ENCODE measurements at regions of chr17 and their contacts with region 1.

Region 1: DNA sequence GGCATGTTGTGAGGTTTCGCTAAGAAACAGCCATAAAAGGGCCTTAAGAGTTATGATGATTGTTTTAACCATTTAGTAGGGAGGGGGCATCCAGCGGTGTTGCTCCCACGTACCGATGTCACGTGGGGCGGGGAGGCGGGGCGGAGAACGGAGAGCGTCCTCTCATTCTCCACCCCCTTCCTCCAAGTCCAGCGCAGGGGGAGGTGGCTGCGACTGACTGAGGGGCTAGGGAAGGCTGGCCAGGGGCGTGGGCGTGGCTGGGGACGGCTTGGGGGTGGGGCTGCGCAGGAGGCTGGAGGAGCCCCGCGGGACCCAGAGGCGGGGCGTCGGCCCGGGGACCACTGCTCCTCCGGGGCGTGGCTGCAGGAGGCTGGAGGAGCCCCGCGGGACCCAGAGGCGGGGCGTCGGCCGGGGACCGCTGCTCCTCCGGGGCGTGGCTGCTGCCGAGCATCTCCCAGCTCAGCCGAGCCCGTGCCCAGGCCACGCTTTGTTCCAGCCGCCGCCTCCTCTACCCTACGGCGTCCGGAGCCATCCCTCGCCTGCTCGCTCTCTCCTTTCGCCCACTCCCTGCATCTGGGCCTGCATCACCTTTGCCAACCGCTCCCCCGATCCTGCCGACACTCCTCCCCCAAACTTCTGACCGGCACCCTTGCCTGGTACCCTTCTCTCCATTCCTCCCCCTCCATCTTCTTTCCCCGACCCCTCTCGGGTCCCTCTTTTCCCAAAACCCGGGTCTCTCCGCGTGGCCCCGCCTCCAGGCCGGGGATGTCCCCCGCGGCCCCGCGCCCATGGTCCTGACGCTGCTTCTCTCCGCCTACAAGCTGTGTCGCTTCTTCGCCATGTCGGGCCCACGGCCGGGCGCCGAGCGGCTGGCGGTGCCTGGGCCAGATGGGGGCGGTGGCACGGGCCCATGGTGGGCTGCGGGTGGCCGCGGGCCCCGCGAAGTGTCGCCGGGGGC is at the start of gene SARM1:
- DNase-seq: peak; percentile 87 to 92 (median 89)
- H3K4me3 ChIP-seq: peak within 1 kb of the TSS; percentile 58
- H3K27ac ChIP-seq: peak within 1 kb of the TSS in 1 of 2 donors; percentile 69
- H3K4me1 ChIP-seq: peaks cover 7% of the 10 kb centered on the region
- H3K27me3 ChIP-seq: no peaks in the 10 kb centered on the region
- CTCF ChIP-seq: no peak
- EP300 ChIP-seq: no peak
- POLR2A ChIP-seq: no peak
- total RNA-seq, gene SARM1: 7.4 to 21.5 (median 16.5) TPM

Region 2: GRCh38 chr17:28188841-28189263 is 182.7 kb before region 1 on chr17:
- intact Hi-C with region 1: no loop called
- DNase-seq: no peak
- H3K4me3 ChIP-seq: no peak overlapping the region
- H3K27ac ChIP-seq: no peak overlapping the region
- H3K4me1 ChIP-seq: no peaks in the 10 kb centered on the region
- H3K27me3 ChIP-seq: no peaks in the 10 kb centered on the region
- CTCF ChIP-seq: no peak
- EP300 ChIP-seq: no peak
- POLR2A ChIP-seq: no peak

Region 3: DNA sequence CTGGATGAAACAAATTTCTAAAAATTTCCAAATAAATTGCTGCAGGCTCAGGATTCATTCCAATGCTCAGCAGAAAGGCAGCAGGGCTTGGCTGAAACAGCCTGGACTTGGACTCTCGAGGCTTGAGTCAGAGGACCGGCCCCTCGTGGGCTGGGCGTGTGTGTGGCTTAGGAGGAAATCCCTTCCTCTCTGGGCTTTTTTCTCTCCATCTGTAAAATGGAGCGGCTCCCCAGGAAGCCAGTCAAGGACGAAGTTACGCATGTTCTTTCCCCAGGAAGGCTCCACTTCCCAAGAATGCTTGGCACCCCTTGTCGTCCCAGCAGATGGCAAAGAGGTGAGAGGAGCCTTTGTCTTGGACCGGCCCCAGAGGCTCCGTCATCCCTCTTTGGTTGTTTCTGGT is 21.0 kb after region 1 on chr17:
- intact Hi-C with region 1: loop called in 1 of 4 experiments (anchors 2 kb)
- DNase-seq: peak in 1 of 5 donors; percentile 12
- H3K4me3 ChIP-seq: no peak overlapping the region
- H3K27ac ChIP-seq: no peak overlapping the region
- H3K4me1 ChIP-seq: no peaks in the 10 kb centered on the region
- H3K27me3 ChIP-seq: no peaks in the 10 kb centered on the region
- CTCF ChIP-seq: no peak
- EP300 ChIP-seq: no peak
- POLR2A ChIP-seq: no peak

Measured in ovary (tissue), 10 donors.